ENCODE measurements at regions of chr2 and their contacts with region 1.

Region 1: DNA sequence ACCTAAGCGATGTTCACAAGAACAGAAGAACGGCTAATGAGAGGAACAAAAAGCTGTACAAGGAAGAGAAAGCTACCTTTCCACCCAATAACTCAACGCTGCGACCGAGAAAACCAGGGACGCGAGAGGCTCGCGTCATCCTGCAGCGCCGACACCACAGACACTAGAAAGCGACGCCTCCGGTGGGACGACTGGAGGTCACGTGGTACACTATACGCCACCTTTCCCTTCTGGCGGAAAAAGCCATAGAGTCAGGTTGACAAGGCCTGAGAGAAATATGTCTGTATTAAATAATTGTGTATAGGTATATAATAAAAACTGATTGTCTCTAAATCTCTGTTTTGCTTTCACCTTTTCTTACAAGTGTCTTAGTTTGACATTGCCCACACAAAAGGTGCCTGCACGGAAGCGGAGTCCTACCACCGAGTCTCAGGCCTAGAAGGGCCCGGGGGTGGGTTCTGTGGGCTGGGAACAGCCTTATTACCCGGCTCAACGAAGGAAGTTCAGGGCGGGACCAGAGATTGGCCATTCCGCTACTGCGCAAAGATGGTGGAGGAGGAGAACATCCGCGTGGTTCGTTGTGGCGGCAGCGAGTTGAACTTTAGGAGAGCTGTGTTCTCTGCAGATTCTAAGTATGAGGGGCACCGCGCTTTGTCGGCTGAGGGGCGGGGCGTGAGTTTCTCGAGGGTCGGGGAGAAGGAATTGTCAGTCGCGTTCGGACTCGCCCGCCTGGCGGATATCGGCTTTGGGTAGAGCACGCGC is at the start of gene WDR75:
- DNase-seq: peak; percentile 85 to 97 (median 92)
- ATAC-seq: peak; percentile 94
- H3K4me3 ChIP-seq: peak within 1 kb of the TSS; percentile 71 to 92
- H3K4me3 Mint-ChIP-seq: peak within 1 kb of the TSS; percentile 100
- H3K27ac ChIP-seq: peak within 1 kb of the TSS; percentile 96 to 98
- H3K27ac Mint-ChIP-seq: peak within 1 kb of the TSS; percentile 100
- H3K4me1 ChIP-seq: peaks cover 33% of the 10 kb centered on the region
- H3K4me1 Mint-ChIP-seq: peaks cover 12% of the 10 kb centered on the region
- H3K27me3 ChIP-seq: no peaks in the 10 kb centered on the region
- H3K27me3 Mint-ChIP-seq: no peaks in the 10 kb centered on the region
- CTCF ChIP-seq: no peak
- total RNA-seq, gene WDR75: 45.0 to 52.6 TPM

Region 2: DNA sequence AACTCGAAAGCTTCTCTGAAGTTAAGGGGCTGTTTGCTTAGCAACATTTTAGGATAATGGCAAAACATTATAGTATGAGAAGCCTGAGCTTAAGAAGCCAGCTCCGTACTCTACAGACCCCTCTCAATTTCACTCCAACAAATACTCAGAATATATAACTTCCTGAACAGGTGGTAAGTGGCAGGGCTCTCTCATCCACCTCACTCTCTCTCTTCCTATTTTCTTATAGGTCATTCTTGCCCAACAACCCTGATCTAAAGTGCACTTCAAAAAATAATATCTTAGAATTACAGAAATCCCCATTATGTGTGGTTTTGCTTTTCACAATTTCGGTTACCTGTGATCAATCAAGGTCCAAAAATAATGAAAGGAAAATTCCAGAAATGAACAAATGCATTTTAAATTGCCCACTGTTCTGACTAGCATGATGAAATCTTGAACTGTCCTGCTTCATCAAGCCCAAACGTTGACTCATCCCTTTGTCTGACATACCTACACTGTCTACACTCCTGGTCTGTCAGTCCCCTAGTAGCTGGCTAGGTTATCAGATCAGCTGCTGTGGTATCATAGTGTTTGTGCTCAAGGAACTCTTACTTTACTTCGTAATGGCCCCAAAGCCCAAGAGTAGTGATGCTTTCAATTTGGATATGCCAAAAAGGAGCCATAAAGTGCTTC is 138.7 kb before region 1 on chr2:
- CTCF ChIA-PET with region 1: no interaction called
- POLR2A ChIA-PET with region 1: no interaction called
- intact Hi-C with region 1: no loop called
- DNase-seq: no peak
- ATAC-seq: no peak
- H3K4me3 ChIP-seq: no peak overlapping the region
- H3K4me3 Mint-ChIP-seq: peak overlapping the region; percentile 19
- H3K27ac ChIP-seq: no peak overlapping the region
- H3K27ac Mint-ChIP-seq: peak overlapping the region; percentile 32
- H3K4me1 ChIP-seq: peaks cover 80% of the 10 kb centered on the region
- H3K4me1 Mint-ChIP-seq: peaks cover 87% of the 10 kb centered on the region
- H3K27me3 ChIP-seq: no peaks in the 10 kb centered on the region
- H3K27me3 Mint-ChIP-seq: no peaks in the 10 kb centered on the region
- CTCF ChIP-seq: no peak

Region 3: DNA sequence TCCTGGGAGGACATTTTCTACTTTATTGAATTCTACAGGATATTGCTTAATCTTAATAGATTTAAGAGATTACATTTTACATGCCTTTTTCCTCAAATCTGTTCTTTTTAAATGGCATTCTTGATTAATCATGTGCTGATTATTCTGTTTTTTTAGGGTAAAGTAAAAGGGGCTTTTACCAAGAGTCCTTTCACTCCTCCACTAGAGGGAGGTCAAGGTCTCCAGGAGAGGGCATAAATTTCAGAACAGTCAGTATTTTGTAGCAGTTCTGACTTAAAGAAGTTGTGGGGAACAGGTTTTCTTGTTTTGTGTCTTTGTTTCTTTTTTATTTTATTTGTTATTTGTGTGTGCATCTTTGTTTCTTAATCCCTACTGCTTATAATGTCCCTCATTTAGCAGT is 25.5 kb after region 1 on chr2:
- CTCF ChIA-PET with region 1: interaction called, 3 read pairs
- POLR2A ChIA-PET with region 1: no interaction called
- intact Hi-C with region 1: loop called in 1 of 2 experiments (anchors 2 kb)
- DNase-seq: peak in 2 of 9 experiments; percentile 14 to 26
- ATAC-seq: peak; percentile 51
- H3K4me3 ChIP-seq: no peak overlapping the region
- H3K4me3 Mint-ChIP-seq: no peak overlapping the region
- H3K27ac ChIP-seq: no peak overlapping the region
- H3K27ac Mint-ChIP-seq: no peak overlapping the region
- H3K4me1 ChIP-seq: no peaks in the 10 kb centered on the region
- H3K4me1 Mint-ChIP-seq: no peaks in the 10 kb centered on the region
- H3K27me3 ChIP-seq: no peaks in the 10 kb centered on the region
- H3K27me3 Mint-ChIP-seq: no peaks in the 10 kb centered on the region
- CTCF ChIP-seq: no peak

Region 4: GRCh38 chr2:189674374-189675112 is 233.4 kb after region 1 on chr2 and contains the start of gene ANKAR:
- CTCF ChIA-PET with region 1: no interaction called
- POLR2A ChIA-PET with region 1: interaction called, 4 read pairs
- intact Hi-C with region 1: loop called in 1 of 2 experiments (anchors 1 kb)
- DNase-seq: peak; percentile 64 to 91 (median 79)
- ATAC-seq: peak; percentile 91
- H3K4me3 ChIP-seq: peak within 1 kb of the TSS; percentile 81 to 88
- H3K4me3 Mint-ChIP-seq: peak within 1 kb of the TSS; percentile 91
- H3K27ac ChIP-seq: peak within 1 kb of the TSS; percentile 86 to 97
- H3K27ac Mint-ChIP-seq: peak within 1 kb of the TSS; percentile 99
- H3K4me1 ChIP-seq: peaks cover 11% of the 10 kb centered on the region
- H3K4me1 Mint-ChIP-seq: peaks cover 49% of the 10 kb centered on the region
- H3K27me3 ChIP-seq: no peaks in the 10 kb centered on the region
- H3K27me3 Mint-ChIP-seq: no peaks in the 10 kb centered on the region
- CTCF ChIP-seq: peak; percentile 72
- total RNA-seq, gene ANKAR: 7.3 to 9.2 TPM

Region 5: GRCh38 chr2:190319555-190320498 is 878.7 kb after region 1 on chr2 and contains the start of gene HIBCH:
- CTCF ChIA-PET with region 1: no interaction called
- POLR2A ChIA-PET with region 1: no interaction called
- intact Hi-C with region 1: loop called (anchors 1 to 10 kb)
- DNase-seq: peak; percentile 51 to 91 (median 83)
- ATAC-seq: peak; percentile 89
- H3K4me3 ChIP-seq: peak within 1 kb of the TSS; percentile 77 to 94
- H3K4me3 Mint-ChIP-seq: peak within 1 kb of the TSS; percentile 100
- H3K27ac ChIP-seq: peak within 1 kb of the TSS; percentile 66 to 88
- H3K27ac Mint-ChIP-seq: peak within 1 kb of the TSS; percentile 98
- H3K4me1 ChIP-seq: peaks cover 19% of the 10 kb centered on the region
- H3K4me1 Mint-ChIP-seq: peaks cover 50% of the 10 kb centered on the region
- H3K27me3 ChIP-seq: no peaks in the 10 kb centered on the region
- H3K27me3 Mint-ChIP-seq: no peaks in the 10 kb centered on the region
- CTCF ChIP-seq: peak; percentile 70
- total RNA-seq, gene HIBCH: 3.7 to 5.8 TPM

Region 6: DNA sequence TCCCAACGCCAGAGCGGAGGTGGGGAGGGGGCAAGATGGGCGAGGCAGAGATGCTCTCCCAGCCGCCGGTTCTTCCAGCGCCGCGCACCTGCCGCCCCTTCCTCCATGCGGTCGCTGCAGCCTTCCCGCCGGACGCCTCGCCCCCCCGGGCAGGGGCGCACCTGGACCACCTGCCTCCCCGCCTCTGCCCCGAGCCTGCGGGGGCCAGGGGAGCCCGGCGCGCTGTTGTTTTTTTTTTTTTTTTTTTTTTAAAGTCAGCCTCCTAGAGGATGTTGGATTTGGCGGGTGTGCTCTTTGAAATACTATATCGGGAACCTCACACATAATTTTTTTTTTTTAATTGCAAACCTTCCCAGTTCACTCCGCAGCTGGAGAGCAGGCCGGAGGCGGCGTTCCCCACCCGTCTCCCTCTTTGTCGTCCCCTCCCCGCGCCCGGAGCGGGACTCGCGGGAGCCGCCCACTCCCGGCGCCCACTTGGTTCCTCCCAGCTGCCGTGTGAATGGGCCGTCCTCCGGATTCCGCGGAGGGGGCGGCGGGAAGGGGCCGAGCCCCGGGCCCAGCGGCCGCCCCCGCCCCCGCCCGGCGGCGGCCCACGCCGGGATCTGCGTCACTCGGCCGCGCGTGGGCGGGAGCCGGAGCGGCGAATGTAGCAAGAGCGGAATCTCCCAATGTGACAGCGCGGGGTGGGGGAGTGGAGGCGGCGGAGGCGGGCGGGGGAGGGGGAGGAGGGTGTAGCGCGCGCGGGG is 1207.3 kb after region 1 on chr2:
- CTCF ChIA-PET with region 1: no interaction called
- POLR2A ChIA-PET with region 1: no interaction called
- intact Hi-C with region 1: loop called (anchors 5 to 10 kb)
- DNase-seq: peak; percentile 80 to 97 (median 88)
- ATAC-seq: peak; percentile 81
- H3K4me3 ChIP-seq: peak overlapping the region; percentile 58 to 63
- H3K4me3 Mint-ChIP-seq: peak overlapping the region; percentile 84
- H3K27ac ChIP-seq: peak overlapping the region; percentile 63 to 84
- H3K27ac Mint-ChIP-seq: peak overlapping the region; percentile 88
- H3K4me1 ChIP-seq: peaks cover 26% of the 10 kb centered on the region
- H3K4me1 Mint-ChIP-seq: peaks cover 44% of the 10 kb centered on the region
- H3K27me3 ChIP-seq: no peaks in the 10 kb centered on the region
- H3K27me3 Mint-ChIP-seq: no peaks in the 10 kb centered on the region
- CTCF ChIP-seq: no peak

Measured in CD8-positive, alpha-beta T cell (primary cell).